ENCODE measurements at regions of chr17 and their contacts with region 1.

Region 1: GRCh38 chr17:28405632-28406472 is at the start of gene SLC46A1:
- DNase-seq: peak; percentile 28
- ATAC-seq: peak; percentile 75
- H3K4me3 ChIP-seq: peak within 1 kb of the TSS; percentile 68 to 84 (median 76)
- H3K27ac ChIP-seq: peak within 1 kb of the TSS; percentile 67
- H3K4me1 ChIP-seq: peaks cover 27% of the 10 kb centered on the region
- H3K27me3 ChIP-seq: no peaks in the 10 kb centered on the region; a peak in 1 of 5 replicates
- CTCF ChIP-seq: no peak
- EP300 ChIP-seq: no peak
- POLR2A ChIP-seq: peak in 1 of 2 experiments; percentile 75; a peak in 2 of 4 replicates
- RAD21 ChIP-seq: no peak
- total RNA-seq, gene SLC46A1: 9.4 and 22.6 TPM in 2 replicates

Region 2: DNA sequence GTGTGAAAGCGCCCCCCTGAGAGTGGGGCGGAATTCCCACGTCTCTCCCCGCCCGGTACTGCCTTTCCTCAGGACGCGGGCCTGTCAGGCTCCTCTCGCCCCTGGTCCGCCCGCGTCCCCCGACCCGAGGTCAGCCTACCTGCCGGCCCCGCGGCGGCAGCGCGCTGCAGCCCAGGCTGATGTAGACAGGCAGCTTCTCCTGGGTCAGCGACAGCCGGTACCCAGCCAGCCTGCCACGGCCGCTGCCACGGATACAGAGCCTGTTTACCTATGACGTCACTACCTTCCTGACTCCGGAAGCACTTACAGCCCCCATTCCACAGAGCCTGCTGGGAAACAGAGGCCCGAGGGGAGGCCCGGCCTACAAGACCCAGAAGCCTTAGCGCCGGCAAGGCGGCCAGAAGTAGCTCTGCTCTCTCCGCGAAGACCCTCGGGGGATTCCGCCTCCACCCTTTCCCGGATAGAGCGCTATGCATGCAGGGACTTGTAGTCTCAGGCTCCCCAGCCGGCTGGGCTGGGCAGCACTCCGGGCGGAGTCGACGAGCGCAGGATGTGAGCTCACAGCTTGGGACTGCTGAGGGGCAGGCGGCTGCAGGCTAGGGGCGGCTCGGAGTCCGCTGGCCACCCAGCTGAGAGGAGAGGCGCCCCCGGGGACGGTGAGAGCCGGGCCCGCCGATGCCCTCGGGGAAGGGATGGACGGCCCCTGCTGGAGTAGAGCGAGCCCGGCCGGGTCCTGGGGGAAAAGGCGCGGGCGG is 70.5 kb before region 1 on chr17 and contains the starts of genes IFT20 and TNFAIP1:
- CTCF ChIA-PET with region 1: no interaction called
- POLR2A ChIA-PET with region 1: interaction called, 18 read pairs
- in situ Hi-C with region 1: no loop called
- intact Hi-C with region 1: no loop called
- DNase-seq: peak; percentile 99
- ATAC-seq: peak; percentile 97
- H3K4me3 ChIP-seq: peak within 1 kb of the TSS; percentile 92 to 94 (median 93)
- H3K27ac ChIP-seq: peak within 1 kb of the TSS; percentile 72
- H3K4me1 ChIP-seq: peaks cover 46% of the 10 kb centered on the region
- H3K27me3 ChIP-seq: no peaks in the 10 kb centered on the region; a peak in 1 of 5 replicates
- CTCF ChIP-seq: peak; percentile 49
- EP300 ChIP-seq: 0 out of 4 replicates have a peak, but pooled peaks of 1 of the 2 experiments have one; percentile 34
- POLR2A ChIP-seq: peak; percentile 42 to 87; a peak in 3 of 4 replicates
- RAD21 ChIP-seq: peak; percentile 26; the same call in 1 of the 2 replicates
- total RNA-seq, gene IFT20: 23.4 and 28.0 TPM in 2 replicates
- total RNA-seq, gene TNFAIP1: 17.5 and 18.7 TPM in 2 replicates

Region 3: DNA sequence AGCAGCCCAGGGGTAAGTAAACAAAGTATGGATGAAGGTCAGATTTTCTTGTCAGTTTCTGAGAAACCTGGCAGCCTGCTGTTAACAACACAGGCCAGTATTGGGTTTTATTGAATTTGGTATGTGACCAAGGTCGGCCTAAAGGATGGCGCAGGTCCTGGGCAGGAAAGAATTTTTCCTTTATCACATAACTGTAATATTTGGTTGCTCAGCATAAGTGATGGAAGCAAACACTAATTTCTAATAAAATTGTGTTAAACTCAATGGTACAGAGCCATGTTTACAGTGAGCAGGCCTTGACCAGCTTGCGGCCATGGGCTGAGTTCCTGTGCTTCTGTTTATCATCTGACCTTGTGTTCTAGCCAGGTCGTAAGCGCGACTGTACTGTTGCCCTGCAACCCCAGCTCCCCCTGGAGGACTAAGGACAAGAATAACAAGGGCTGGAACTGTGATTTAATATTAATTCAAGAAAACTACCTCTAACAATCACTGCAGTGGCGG is 59.1 kb before region 1 on chr17:
- CTCF ChIA-PET with region 1: no interaction called
- POLR2A ChIA-PET with region 1: interaction called, 22 read pairs
- in situ Hi-C with region 1: no loop called
- intact Hi-C with region 1: no loop called
- DNase-seq: peak; percentile 69
- ATAC-seq: peak; percentile 86
- H3K4me3 ChIP-seq: no peak overlapping the region
- H3K27ac ChIP-seq: peak overlapping the region; percentile 43
- H3K4me1 ChIP-seq: peaks cover 26% of the 10 kb centered on the region
- H3K27me3 ChIP-seq: no peaks in the 10 kb centered on the region
- CTCF ChIP-seq: peak; percentile 84
- EP300 ChIP-seq: peak in 1 of 2 experiments; percentile 37; a peak in 2 of 4 replicates
- POLR2A ChIP-seq: no peak
- RAD21 ChIP-seq: peak; percentile 62; the same call in 1 of the 2 replicates

Region 4: GRCh38 chr17:28384281-28385036 is 21.4 kb before region 1 on chr17:
- CTCF ChIA-PET with region 1: no interaction called
- POLR2A ChIA-PET with region 1: interaction called, 27 read pairs
- in situ Hi-C with region 1: no loop called
- intact Hi-C with region 1: no loop called
- DNase-seq: no peak
- ATAC-seq: no peak
- H3K4me3 ChIP-seq: no peak overlapping the region
- H3K27ac ChIP-seq: no peak overlapping the region
- H3K4me1 ChIP-seq: peaks cover 26% of the 10 kb centered on the region
- H3K27me3 ChIP-seq: no peaks in the 10 kb centered on the region
- CTCF ChIP-seq: no peak
- EP300 ChIP-seq: no peak
- POLR2A ChIP-seq: no peak
- RAD21 ChIP-seq: no peak

Region 5: GRCh38 chr17:28416703-28417311 is 11.0 kb after region 1 on chr17:
- CTCF ChIA-PET with region 1: interaction called, 4 read pairs
- POLR2A ChIA-PET with region 1: interaction called, 30 read pairs
- in situ Hi-C with region 1: no loop called
- intact Hi-C with region 1: no loop called
- DNase-seq: peak; percentile 87
- ATAC-seq: peak; percentile 99
- H3K4me3 ChIP-seq: no peak overlapping the region; a peak in 1 of 6 replicates
- H3K27ac ChIP-seq: no peak overlapping the region
- H3K4me1 ChIP-seq: peaks cover 22% of the 10 kb centered on the region
- H3K27me3 ChIP-seq: 0 out of 5 replicates have a peak, but pooled peaks cover 0 to 7% of the 10 kb centered on the region in 2 experiments
- CTCF ChIP-seq: peak; percentile 96
- EP300 ChIP-seq: no peak
- POLR2A ChIP-seq: no peak
- RAD21 ChIP-seq: peak; percentile 83

Region 6: GRCh38 chr17:28433721-28434120 is 27.9 kb after region 1 on chr17:
- CTCF ChIA-PET with region 1: no interaction called
- POLR2A ChIA-PET with region 1: no interaction called
- in situ Hi-C with region 1: no loop called
- intact Hi-C with region 1: no loop called
- DNase-seq: no peak
- ATAC-seq: no peak
- H3K4me3 ChIP-seq: no peak overlapping the region
- H3K27ac ChIP-seq: no peak overlapping the region
- H3K4me1 ChIP-seq: no peaks in the 10 kb centered on the region
- H3K27me3 ChIP-seq: no peaks in the 10 kb centered on the region
- CTCF ChIP-seq: no peak
- EP300 ChIP-seq: no peak
- POLR2A ChIP-seq: no peak
- RAD21 ChIP-seq: no peak

Measured in HepG2 (cell line).